Activated CD8-positive, alpha-beta memory T cell treated with anti-CD3 and anti-CD28 coated beads, Interleukin-2, amount 10 ng/mL, durations not matched to agents 7 days and 5 days (primary cell): ENCODE measurements at regions of chr5 and their contacts with region 1.

Region 1: DNA sequence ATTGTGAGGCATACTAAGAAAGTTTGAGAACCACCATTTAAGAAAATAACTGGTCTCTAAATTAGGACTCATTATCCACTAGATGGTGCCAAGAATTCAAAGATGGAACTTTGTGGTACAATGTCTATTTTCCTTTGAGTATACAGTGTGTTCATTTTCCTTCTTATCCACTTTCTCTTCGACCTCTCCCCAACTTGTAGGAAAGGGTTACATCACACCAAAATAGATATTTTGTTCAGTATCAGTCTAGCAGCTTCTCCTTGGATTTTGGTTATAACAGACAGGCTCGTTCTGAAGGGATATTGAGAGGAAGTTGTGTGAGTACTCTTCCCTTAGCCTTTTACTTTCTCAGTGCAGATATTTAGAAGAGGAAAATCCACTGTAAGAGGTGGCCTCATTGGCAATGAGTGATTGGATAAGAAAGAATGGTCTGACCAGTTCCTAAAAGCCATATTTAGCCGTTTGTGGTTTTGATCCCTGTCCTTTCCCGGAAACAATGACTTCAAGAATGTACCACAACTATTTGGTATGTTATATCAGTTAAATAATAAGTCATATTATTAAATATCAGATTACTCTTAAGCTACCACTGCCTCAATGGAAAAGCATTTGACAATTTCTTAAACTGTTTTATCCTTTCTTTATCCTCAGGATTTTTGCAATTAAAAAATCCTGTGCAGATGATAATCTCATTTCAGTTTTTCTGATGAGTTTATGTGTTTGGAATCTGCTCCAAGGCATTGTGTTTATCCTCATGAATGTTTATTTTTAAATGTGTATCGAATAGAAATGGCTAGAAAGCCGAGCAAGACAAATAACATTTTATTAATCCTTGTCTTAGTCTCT is 69.0 kb upstream of the GRAMD2B start:
- DNase-seq: no peak
- ATAC-seq: peak; percentile 36
- H3K4me3 Mint-ChIP-seq: no peak overlapping the region
- H3K27ac Mint-ChIP-seq: no peak overlapping the region
- H3K4me1 Mint-ChIP-seq: peaks cover 12% of the 10 kb centered on the region
- H3K27me3 Mint-ChIP-seq: peaks cover 21% of the 10 kb centered on the region

Region 2: GRCh38 chr5:126178521-126178920 is 175.7 kb before region 1 on chr5:
- CTCF ChIA-PET with region 1: no interaction called
- DNase-seq: no peak
- ATAC-seq: no peak
- H3K4me3 Mint-ChIP-seq: no peak overlapping the region
- H3K27ac Mint-ChIP-seq: no peak overlapping the region
- H3K4me1 Mint-ChIP-seq: no peaks in the 10 kb centered on the region
- H3K27me3 Mint-ChIP-seq: no peaks in the 10 kb centered on the region

Region 3: DNA sequence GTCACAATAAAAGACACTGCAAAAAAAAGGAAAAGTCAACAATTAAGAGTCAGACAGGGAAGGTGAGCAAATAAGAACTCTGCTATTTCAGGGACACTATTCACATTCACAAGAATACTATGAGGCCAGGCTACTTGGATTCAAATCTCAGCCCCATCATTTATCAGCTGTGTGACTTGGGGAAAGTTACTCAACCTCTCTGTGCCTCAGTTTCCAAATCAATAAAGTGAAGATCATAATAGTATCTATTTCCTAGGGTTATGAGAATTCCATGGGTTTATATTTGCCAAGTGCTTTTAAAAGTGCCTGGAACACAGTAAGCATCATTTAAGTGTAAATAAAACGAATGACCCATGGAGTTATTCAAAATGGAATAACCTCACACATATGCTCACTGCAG is 184.3 kb after region 1 on chr5:
- CTCF ChIA-PET with region 1: interaction called, 18 read pairs
- DNase-seq: no peak
- ATAC-seq: no peak
- H3K4me3 Mint-ChIP-seq: no peak overlapping the region
- H3K27ac Mint-ChIP-seq: no peak overlapping the region
- H3K4me1 Mint-ChIP-seq: peaks cover 2% of the 10 kb centered on the region
- H3K27me3 Mint-ChIP-seq: peaks cover 7% of the 10 kb centered on the region